Breast epithelium (tissue), 4 donors: ENCODE measurements at regions of chr7 and their contacts with region 1.

Region 1: DNA sequence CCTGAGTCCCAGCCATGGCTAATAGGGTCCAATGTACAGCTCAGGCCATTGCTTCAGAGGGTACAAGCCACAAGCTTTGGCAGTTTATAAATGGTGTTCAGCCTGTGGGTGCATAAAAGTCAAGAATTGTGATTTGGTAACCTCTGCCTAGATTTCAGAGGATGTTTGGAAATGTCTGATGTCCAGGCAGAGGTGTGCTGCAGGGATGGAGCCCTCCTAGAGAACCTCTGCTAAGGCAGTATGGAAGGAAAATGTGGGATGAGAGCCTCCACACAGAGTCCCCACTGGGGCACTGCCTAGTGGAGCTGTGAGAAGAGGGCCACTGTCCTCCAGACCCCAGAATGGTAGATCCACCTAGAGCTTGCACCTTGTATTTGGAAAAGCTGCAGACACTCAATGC is 779.9 kb downstream of the GRM8 start:
- DNase-seq: no peak
- H3K4me3 ChIP-seq: no peak overlapping the region
- H3K27ac ChIP-seq: no peak overlapping the region
- H3K4me1 ChIP-seq: no peaks in the 10 kb centered on the region
- H3K27me3 ChIP-seq: no peaks in the 10 kb centered on the region
- CTCF ChIP-seq: no peak
- POLR2A ChIP-seq: no peak

Region 2: DNA sequence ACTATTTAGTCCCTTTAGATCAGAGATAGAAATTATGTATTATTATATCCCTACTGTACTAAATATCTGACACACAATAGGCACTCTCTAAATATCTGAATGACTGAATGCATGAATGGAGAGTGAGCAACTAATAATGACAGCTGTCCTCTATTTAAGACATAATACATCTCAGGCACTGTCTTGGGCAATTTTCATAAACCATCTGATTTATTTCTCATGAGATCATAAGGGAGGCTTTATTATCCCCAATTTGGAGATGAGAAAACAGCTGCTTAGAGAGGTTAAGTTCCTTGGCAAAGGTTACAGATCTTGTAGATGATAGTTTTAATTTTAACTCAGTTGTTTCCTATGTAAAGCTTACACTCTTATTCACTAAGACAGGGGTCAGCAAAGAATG is 209.4 kb after region 1 on chr7:
- intact Hi-C with region 1: loop called (anchors 5 kb)
- DNase-seq: no peak
- H3K4me3 ChIP-seq: no peak overlapping the region
- H3K27ac ChIP-seq: no peak overlapping the region
- H3K4me1 ChIP-seq: no peaks in the 10 kb centered on the region
- H3K27me3 ChIP-seq: no peaks in the 10 kb centered on the region
- CTCF ChIP-seq: no peak
- POLR2A ChIP-seq: no peak